ENCODE measurements at regions of chr3 and their contacts with region 1.

Region 1: DNA sequence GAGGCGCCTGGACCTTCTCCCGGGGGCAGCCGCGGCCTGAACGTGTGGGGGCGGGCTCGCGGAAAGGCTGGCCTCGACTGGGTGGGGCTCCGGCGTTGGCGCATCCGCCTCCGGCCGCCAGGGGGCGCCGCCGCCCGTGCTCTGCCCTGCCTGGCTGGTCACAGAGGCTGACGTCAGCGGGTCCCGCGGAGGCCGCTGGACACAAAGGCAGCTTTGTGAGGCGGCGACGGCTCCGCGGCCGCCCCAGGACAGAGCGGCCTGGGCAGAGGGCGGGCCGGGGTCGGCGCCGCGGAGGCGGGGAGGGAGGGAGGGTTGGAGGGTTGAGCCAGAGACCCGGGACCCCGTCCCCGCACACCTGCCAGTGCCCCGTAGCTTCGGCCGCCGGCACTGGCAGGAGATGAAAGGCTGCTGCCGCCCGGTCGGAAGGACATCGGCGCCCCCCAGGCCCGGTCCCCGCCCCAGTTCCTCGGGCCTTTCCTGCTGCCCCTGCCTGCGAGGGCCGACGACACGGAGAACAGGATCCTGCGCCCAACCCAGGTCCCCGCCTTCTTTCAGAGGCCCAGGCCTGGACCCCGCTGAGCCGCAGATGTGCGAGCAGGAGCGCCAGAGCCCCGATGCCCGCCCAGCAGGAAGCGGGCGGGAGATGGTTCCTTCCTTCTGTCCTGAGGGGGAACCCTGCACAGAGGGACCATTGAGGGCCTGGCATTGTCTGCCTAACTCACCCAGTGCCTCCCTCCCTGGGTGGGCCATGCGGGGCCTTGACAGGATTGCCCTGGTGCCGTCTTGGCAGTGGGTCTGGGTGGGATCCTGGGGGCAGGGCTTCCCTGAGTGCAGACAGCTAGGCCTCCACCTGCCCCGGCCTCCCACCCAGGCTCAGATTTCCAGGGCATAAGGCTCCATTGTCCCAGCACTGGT is 8.7 kb upstream of the SEMA3B start:
- DNase-seq: no peak
- ATAC-seq: peak; percentile 77
- H3K4me3 ChIP-seq: peak overlapping the region; percentile 59 to 64
- H3K27ac ChIP-seq: peak overlapping the region; percentile 77
- H3K4me1 ChIP-seq: peaks cover 35 to 60% of the 10 kb centered on the region in 2 experiments
- H3K27me3 ChIP-seq: no peaks in the 10 kb centered on the region
- CTCF ChIP-seq: peak in 2 of 3 experiments; percentile 83 to 98; a peak in 4 of 6 replicates
- POLR2A ChIP-seq: no peak
- RAD21 ChIP-seq: no peak

Region 2: GRCh38 chr3:49656541-49657112 is 603.7 kb before region 1 on chr3:
- CTCF ChIA-PET with region 1: no interaction called
- POLR2A ChIA-PET with region 1: no interaction called
- RAD21 ChIA-PET with region 1: no interaction called
- intact Hi-C with region 1: no loop called
- DNase-seq: no peak
- ATAC-seq: no peak
- H3K4me3 ChIP-seq: no peak overlapping the region
- H3K27ac ChIP-seq: no peak overlapping the region
- H3K4me1 ChIP-seq: peaks cover 0 to 5% of the 10 kb centered on the region in 2 experiments; a peak in 1 of 4 replicates
- H3K27me3 ChIP-seq: no peaks in the 10 kb centered on the region
- CTCF ChIP-seq: no peak
- POLR2A ChIP-seq: no peak
- RAD21 ChIP-seq: no peak

Region 3: DNA sequence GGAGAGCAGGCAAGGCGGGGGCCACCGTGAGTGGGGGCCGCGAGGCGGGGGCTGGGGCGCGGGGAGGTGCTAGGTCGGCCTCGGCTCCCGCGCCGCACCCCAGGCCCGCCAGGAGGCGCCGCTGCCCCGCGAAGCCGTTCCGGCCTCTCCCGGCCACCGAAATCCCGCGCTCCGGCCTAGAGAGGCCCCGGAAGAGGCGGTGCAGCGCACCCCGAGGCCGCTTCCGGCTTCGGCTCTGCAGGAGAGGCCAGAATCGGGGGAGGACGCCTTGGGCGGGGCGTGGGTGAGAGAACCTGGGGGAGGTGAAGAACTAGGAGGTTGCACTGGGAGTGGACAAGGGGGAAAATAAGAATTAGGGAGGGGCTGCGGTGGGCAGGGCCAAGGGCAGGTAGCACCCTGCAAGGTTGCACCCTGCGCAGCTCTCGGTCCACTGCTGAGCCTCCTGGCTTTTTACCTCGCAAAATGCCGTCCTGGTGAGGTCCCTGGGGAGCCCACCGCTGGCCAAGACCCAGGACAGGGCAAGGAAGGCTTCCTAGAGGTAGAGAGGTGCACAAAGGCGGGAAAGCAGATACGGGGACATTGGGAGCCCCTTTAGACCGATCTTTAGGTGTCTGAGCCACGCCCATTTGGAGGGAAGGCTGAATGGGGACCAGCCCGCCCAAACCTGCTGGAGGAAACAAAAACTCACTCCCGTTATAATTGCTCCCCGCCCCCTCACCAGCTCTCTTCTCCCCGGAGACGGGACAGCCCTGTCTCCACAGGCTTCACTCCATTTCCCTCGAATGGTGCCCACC is 32.7 kb before region 1 on chr3:
- CTCF ChIA-PET with region 1: interaction called, 25 read pairs
- POLR2A ChIA-PET with region 1: interaction called, 3 read pairs
- RAD21 ChIA-PET with region 1: interaction called, 4 to 5 read pairs
- intact Hi-C with region 1: loop called (anchors 1 kb)
- DNase-seq: peak; percentile 95
- ATAC-seq: peak; percentile 86
- H3K4me3 ChIP-seq: peak overlapping the region; percentile 58 to 87
- H3K27ac ChIP-seq: peak overlapping the region; percentile 87
- H3K4me1 ChIP-seq: peaks cover 10 to 34% of the 10 kb centered on the region in 2 experiments
- H3K27me3 ChIP-seq: no peaks in the 10 kb centered on the region
- CTCF ChIP-seq: peak in 2 of 3 experiments; percentile 70 to 76; a peak in 4 of 6 replicates
- POLR2A ChIP-seq: peak; percentile 62
- RAD21 ChIP-seq: no peak

Region 4: GRCh38 chr3:50235716-50236496 is 24.4 kb before region 1 on chr3 and contains the start of gene GNAI2:
- CTCF ChIA-PET with region 1: interaction called, 14 read pairs
- POLR2A ChIA-PET with region 1: interaction called, 9 read pairs
- RAD21 ChIA-PET with region 1: no interaction called
- intact Hi-C with region 1: no loop called
- DNase-seq: peak; percentile 93
- ATAC-seq: peak; percentile 92
- H3K4me3 ChIP-seq: peak within 1 kb of the TSS; percentile 80 to 89
- H3K27ac ChIP-seq: peak within 1 kb of the TSS; percentile 81
- H3K4me1 ChIP-seq: peaks cover 43 to 55% of the 10 kb centered on the region in 2 experiments
- H3K27me3 ChIP-seq: no peaks in the 10 kb centered on the region
- CTCF ChIP-seq: no peak
- POLR2A ChIP-seq: peak; percentile 88
- RAD21 ChIP-seq: no peak
- total RNA-seq, gene GNAI2: 170 TPM

Region 5: GRCh38 chr3:50245831-50246516 is 14.3 kb before region 1 on chr3:
- CTCF ChIA-PET with region 1: interaction called, 46 read pairs
- POLR2A ChIA-PET with region 1: interaction called, 8 read pairs
- RAD21 ChIA-PET with region 1: interaction called in 1 of 2 experiments, 3 read pairs
- intact Hi-C with region 1: no loop called
- DNase-seq: no peak
- ATAC-seq: peak; percentile 87
- H3K4me3 ChIP-seq: peak overlapping the region; percentile 50 to 59
- H3K27ac ChIP-seq: peak overlapping the region; percentile 86
- H3K4me1 ChIP-seq: peaks cover 38 to 75% of the 10 kb centered on the region in 2 experiments
- H3K27me3 ChIP-seq: no peaks in the 10 kb centered on the region
- CTCF ChIP-seq: peak in 2 of 3 experiments; percentile 99; a peak in 4 of 6 replicates
- POLR2A ChIP-seq: no peak
- RAD21 ChIP-seq: no peak

Region 6: DNA sequence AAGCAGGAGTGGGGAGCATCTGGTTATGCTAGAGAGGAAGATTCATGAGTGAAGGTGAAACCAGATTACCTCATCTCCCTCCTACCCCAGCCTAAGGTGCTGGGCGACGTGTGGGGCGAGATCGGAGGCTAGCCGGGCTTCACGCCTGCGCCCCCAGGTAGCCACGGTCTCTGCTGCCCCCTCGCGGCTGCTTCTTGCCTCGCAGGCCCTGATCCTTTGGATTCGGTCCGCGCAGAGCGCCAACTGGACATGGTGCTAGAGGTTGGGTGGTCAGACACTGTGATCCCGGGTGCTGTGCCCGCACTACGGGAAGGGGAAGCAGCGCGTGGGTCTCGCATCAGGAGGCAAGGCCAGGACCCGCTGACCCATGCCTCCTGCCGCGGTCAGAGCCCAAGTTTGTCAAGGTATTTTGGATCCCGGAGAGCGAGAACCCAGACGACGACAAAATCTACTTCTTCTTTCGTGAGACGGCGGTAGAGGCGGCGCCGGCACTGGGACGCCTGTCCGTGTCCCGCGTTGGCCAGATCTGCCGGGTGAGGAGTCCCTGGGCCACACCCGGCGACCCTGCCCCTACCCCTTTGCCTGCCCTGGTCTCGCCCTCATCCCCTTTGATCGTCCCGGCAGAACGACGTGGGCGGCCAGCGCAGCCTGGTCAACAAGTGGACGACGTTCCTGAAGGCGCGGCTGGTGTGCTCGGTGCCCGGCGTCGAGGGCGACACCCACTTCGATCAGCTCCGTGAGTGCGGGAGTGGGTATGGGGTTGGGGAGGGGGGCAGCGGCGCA is 12.8 kb after region 1 on chr3:
- CTCF ChIA-PET with region 1: interaction called, 27 read pairs
- POLR2A ChIA-PET with region 1: interaction called, 3 read pairs
- RAD21 ChIA-PET with region 1: interaction called, 4 to 7 read pairs
- intact Hi-C with region 1: no loop called
- DNase-seq: no peak
- ATAC-seq: peak; percentile 62
- H3K4me3 ChIP-seq: peak overlapping the region; percentile 43 to 57
- H3K27ac ChIP-seq: peak overlapping the region; percentile 27; the same call in 1 of the 2 replicates
- H3K4me1 ChIP-seq: peaks cover 51 to 62% of the 10 kb centered on the region in 2 experiments
- H3K27me3 ChIP-seq: no peaks in the 10 kb centered on the region
- CTCF ChIP-seq: peak in 2 of 3 experiments; percentile 93 to 96; a peak in 4 of 6 replicates
- POLR2A ChIP-seq: no peak
- RAD21 ChIP-seq: no peak

Region 7: GRCh38 chr3:50321336-50322114 is 61.2 kb after region 1 on chr3:
- CTCF ChIA-PET with region 1: interaction called, 4 read pairs
- POLR2A ChIA-PET with region 1: no interaction called
- RAD21 ChIA-PET with region 1: interaction called in 1 of 2 experiments, 4 read pairs
- intact Hi-C with region 1: loop called (anchors 2 kb)
- DNase-seq: peak; percentile 84
- ATAC-seq: peak; percentile 66
- H3K4me3 ChIP-seq: peak overlapping the region; percentile 64 to 92
- H3K27ac ChIP-seq: peak overlapping the region; percentile 93
- H3K4me1 ChIP-seq: peaks cover 49 to 76% of the 10 kb centered on the region in 2 experiments
- H3K27me3 ChIP-seq: no peaks in the 10 kb centered on the region
- CTCF ChIP-seq: peak in 2 of 3 experiments; percentile 70 to 71; a peak in 4 of 6 replicates
- POLR2A ChIP-seq: peak; percentile 79
- RAD21 ChIP-seq: no peak

Measured in HCT116 (cell line).